Activated CD4-positive, alpha-beta memory T cell treated with anti-CD3 and anti-CD28 coated beads for 36 hours (primary cell): ENCODE measurements at regions of chr3 and their contacts with region 1.

Region 1: DNA sequence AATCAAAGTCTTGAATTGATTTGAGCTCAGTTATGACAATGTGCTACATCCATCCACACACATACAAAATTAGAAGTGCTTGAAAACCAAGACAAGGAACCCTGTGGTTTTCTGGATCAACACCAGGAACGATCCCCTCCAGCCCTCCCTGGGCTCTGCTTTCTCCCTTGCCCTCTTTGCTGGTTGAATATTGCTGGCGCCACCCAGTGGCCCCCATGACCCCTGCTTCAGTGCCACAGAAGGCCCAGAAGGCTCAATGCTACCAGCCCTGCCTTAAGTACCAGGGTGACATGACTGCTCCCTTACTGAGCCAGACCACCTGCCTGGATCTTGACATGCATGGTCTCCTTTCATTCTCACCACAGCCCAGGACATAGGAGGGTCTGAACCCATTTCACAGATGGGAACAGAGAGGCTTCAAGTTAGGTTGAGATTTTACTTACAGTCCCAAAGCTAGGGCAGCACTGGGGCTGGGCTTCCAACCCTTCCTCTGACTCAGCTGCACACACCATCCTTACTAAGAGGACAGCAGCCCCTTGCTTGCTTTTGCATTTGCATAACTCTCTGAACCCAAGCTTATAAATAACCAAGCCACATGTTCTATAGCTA is 15.0 kb downstream of the IL12A start:
- DNase-seq: peak; percentile 62
- H3K4me3 Mint-ChIP-seq: no peak overlapping the region
- H3K27ac Mint-ChIP-seq: no peak overlapping the region
- H3K4me1 Mint-ChIP-seq: no peaks in the 10 kb centered on the region
- H3K27me3 Mint-ChIP-seq: no peaks in the 10 kb centered on the region

Region 2: DNA sequence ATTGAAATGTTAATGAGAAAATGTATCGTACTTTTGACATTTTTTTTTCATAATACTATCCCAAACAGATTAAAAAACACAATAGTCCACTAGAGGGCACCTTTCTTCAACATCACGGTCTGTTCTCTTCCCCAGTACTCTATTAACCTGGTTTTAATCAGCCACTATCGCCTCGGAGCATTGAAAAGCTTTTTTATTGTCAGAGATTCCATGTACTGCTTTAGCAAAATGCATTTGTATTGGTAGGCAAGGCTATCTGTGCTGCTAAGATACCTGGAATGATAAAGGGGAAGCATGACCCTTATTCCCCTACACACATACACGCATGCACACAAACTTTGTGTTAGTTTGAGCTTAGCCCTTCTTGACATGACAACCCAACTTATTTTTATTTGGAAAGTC is 175.1 kb before region 1 on chr3:
- CTCF ChIA-PET with region 1: no interaction called
- POLR2A ChIA-PET with region 1: no interaction called
- intact Hi-C with region 1: loop called (anchors 1 kb)
- DNase-seq: no peak
- H3K4me3 Mint-ChIP-seq: no peak overlapping the region
- H3K27ac Mint-ChIP-seq: no peak overlapping the region
- H3K4me1 Mint-ChIP-seq: no peaks in the 10 kb centered on the region
- H3K27me3 Mint-ChIP-seq: no peaks in the 10 kb centered on the region

Region 3: DNA sequence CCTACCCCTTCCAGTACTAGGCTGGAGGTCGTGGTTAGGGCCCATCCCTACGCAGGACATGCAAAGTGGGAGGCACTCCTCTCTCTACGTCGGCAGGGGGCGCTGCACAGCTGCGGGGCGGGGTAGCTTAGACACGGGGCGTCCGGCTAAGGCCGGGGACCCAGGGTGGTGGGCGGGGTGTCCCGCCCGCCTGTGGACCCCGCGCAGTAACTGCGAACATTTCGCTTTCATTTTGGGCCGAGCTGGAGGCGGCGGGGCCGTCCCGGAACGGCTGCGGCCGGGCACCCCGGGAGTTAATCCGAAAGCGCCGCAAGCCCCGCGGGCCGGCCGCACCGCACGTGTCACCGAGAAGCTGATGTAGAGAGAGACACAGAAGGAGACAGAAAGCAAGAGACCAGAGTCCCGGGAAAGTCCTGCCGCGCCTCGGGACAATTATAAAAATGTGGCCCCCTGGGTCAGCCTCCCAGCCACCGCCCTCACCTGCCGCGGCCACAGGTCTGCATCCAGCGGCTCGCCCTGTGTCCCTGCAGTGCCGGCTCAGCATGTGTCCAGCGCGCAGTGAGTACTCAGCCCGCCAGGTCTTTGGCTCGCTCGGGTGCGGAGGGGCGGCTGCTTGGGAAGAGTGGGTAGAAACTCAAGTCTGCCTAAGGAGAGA is 14.9 kb before region 1 on chr3 and contains the start of gene IL12A:
- CTCF ChIA-PET with region 1: interaction called, 105 read pairs
- POLR2A ChIA-PET with region 1: no interaction called
- intact Hi-C with region 1: loop called (anchors 2 kb)
- DNase-seq: peak; percentile 87
- H3K4me3 Mint-ChIP-seq: peak within 1 kb of the TSS; percentile 62
- H3K27ac Mint-ChIP-seq: no peak within 1 kb of the TSS
- H3K4me1 Mint-ChIP-seq: peaks cover 17% of the 10 kb centered on the region
- H3K27me3 Mint-ChIP-seq: no peaks in the 10 kb centered on the region
- total RNA-seq, gene IL12A: not detected